Naive thymus-derived CD4-positive, alpha-beta T cell (primary cell): ENCODE measurements at regions of chr12 and their contacts with region 1.

Region 1: GRCh38 chr12:21613931-21614330 is 9.3 kb upstream of the GYS2 start:
- DNase-seq: no peak
- ATAC-seq: no peak
- H3K4me3 ChIP-seq: no peak overlapping the region
- H3K4me3 Mint-ChIP-seq: peak overlapping the region in 8 of 10 donors; percentile 36 to 82 (median 64)
- H3K27ac ChIP-seq: peak overlapping the region; percentile 61
- H3K27ac Mint-ChIP-seq: peak overlapping the region in 8 of 9 donors; percentile 84 to 98 (median 94)
- H3K4me1 ChIP-seq: peaks cover 25 to 46% of the 10 kb centered on the region in 2 donors
- H3K4me1 Mint-ChIP-seq: peaks cover 35 to 69% (median 60%) of the 10 kb centered on the region in 7 donors
- H3K27me3 ChIP-seq: no peaks in the 10 kb centered on the region
- H3K27me3 Mint-ChIP-seq: no peaks in the 10 kb centered on the region

Region 2: GRCh38 chr12:20314328-20314727 is 1299.6 kb before region 1 on chr12:
- CTCF ChIA-PET with region 1: no interaction called
- POLR2A ChIA-PET with region 1: no interaction called
- intact Hi-C with region 1: no loop called
- DNase-seq: no peak
- ATAC-seq: no peak
- H3K4me3 ChIP-seq: no peak overlapping the region
- H3K4me3 Mint-ChIP-seq: no peak overlapping the region
- H3K27ac ChIP-seq: no peak overlapping the region
- H3K27ac Mint-ChIP-seq: no peak overlapping the region
- H3K4me1 ChIP-seq: no peaks in the 10 kb centered on the region
- H3K4me1 Mint-ChIP-seq: no peaks in the 10 kb centered on the region
- H3K27me3 ChIP-seq: no peaks in the 10 kb centered on the region
- H3K27me3 Mint-ChIP-seq: no peaks in the 10 kb centered on the region

Region 3: GRCh38 chr12:21451529-21451928 is 162.4 kb before region 1 on chr12:
- CTCF ChIA-PET with region 1: no interaction called
- POLR2A ChIA-PET with region 1: no interaction called
- intact Hi-C with region 1: loop called in 1 of 2 experiments (anchors 5 kb)
- DNase-seq: no peak
- ATAC-seq: no peak
- H3K4me3 ChIP-seq: no peak overlapping the region
- H3K4me3 Mint-ChIP-seq: no peak overlapping the region
- H3K27ac ChIP-seq: no peak overlapping the region
- H3K27ac Mint-ChIP-seq: peak overlapping the region in 4 of 9 donors; percentile 6 to 51 (median 28)
- H3K4me1 ChIP-seq: peaks cover 2 to 21% of the 10 kb centered on the region in 2 donors
- H3K4me1 Mint-ChIP-seq: peaks cover 2 to 48% (median 29%) of the 10 kb centered on the region in 7 donors
- H3K27me3 ChIP-seq: no peaks in the 10 kb centered on the region
- H3K27me3 Mint-ChIP-seq: no peaks in the 10 kb centered on the region

Region 4: DNA sequence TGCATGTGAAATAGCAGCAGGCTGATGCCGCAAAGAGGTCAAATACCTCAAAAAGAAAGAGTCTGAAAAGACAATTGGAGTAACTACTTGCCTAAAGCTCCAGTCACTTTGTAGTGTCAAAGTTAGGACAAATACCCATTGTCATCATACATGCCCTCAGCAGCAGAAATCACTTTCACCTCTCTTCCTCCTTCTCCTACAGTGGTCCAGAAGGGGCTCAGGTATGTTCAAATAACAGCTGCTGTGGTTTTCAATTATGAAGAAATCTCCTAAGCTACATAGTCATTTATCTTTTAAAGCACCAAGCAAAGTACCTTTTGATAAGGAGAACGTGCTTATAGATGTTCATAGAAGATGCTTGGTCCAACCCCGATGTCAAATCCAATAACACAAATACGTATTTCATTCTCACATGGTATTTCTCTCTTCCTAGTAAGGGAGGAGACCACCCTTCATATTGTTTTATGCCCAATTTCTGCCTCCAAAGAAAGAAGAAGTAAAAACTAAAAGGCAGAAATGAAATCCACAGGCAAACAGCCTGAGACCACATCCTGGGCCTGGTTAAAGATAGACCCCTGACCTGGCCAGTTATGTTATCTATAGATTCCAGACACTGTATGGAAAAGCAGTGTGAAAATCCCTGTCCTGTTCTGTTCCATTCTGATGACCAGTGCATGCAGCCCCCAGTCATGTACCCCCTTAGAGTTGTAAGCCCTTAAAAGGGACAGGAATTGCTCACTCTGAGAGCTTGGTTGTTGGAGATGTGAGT is 33.0 kb before region 1 on chr12:
- CTCF ChIA-PET with region 1: no interaction called
- POLR2A ChIA-PET with region 1: no interaction called
- intact Hi-C with region 1: no loop called
- DNase-seq: no peak
- ATAC-seq: no peak
- H3K4me3 ChIP-seq: no peak overlapping the region
- H3K4me3 Mint-ChIP-seq: no peak overlapping the region
- H3K27ac ChIP-seq: no peak overlapping the region
- H3K27ac Mint-ChIP-seq: no peak overlapping the region
- H3K4me1 ChIP-seq: no peaks in the 10 kb centered on the region
- H3K4me1 Mint-ChIP-seq: peaks cover 0 to 6% (median 0%) of the 10 kb centered on the region in 7 donors
- H3K27me3 ChIP-seq: peaks cover 0 to 3% of the 10 kb centered on the region in 2 donors
- H3K27me3 Mint-ChIP-seq: peaks cover 5 to 26% (median 17%) of the 10 kb centered on the region in 5 donors

Region 5: DNA sequence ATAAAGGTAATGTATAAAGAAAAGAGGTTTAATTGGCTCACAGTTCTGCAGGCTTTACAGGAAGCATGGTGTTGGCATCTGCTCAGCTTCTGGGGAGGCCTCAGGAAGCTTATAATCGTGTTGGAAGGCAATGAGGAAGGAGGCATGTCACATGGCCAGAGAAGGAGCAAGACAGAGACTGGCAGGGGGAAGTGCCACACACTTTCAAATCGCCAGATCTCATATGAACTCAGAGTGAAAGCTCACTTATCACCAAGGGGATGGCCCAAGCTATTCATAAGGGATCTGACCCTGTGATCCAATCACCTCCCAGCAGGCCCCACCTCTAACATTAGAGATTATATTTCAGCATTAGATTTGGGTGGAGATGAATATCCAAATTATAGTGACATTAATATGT is 17.4 kb after region 1 on chr12:
- CTCF ChIA-PET with region 1: interaction called, 3 read pairs
- POLR2A ChIA-PET with region 1: interaction called, 13 read pairs
- intact Hi-C with region 1: loop called (anchors 1 to 2 kb)
- DNase-seq: no peak
- ATAC-seq: no peak
- H3K4me3 ChIP-seq: no peak overlapping the region
- H3K4me3 Mint-ChIP-seq: peak overlapping the region in 1 of 10 donors; percentile 13
- H3K27ac ChIP-seq: no peak overlapping the region
- H3K27ac Mint-ChIP-seq: peak overlapping the region in 6 of 9 donors; percentile 49 to 76 (median 64)
- H3K4me1 ChIP-seq: no peaks in the 10 kb centered on the region
- H3K4me1 Mint-ChIP-seq: peaks cover 0 to 35% (median 16%) of the 10 kb centered on the region in 7 donors
- H3K27me3 ChIP-seq: no peaks in the 10 kb centered on the region
- H3K27me3 Mint-ChIP-seq: no peaks in the 10 kb centered on the region

Region 6: GRCh38 chr12:21650833-21651396 is 37.0 kb after region 1 on chr12:
- CTCF ChIA-PET with region 1: interaction called, 10 read pairs
- POLR2A ChIA-PET with region 1: interaction called, 15 read pairs
- intact Hi-C with region 1: no loop called
- DNase-seq: no peak
- ATAC-seq: no peak
- H3K4me3 ChIP-seq: peak overlapping the region; percentile 1
- H3K4me3 Mint-ChIP-seq: peak overlapping the region; percentile 28 to 89 (median 68)
- H3K27ac ChIP-seq: peak overlapping the region; percentile 8
- H3K27ac Mint-ChIP-seq: peak overlapping the region; percentile 7 to 84 (median 73)
- H3K4me1 ChIP-seq: peaks cover 15 to 91% of the 10 kb centered on the region in 2 donors
- H3K4me1 Mint-ChIP-seq: peaks cover 71 to 100% (median 94%) of the 10 kb centered on the region in 7 donors
- H3K27me3 ChIP-seq: no peaks in the 10 kb centered on the region
- H3K27me3 Mint-ChIP-seq: no peaks in the 10 kb centered on the region

Region 7: DNA sequence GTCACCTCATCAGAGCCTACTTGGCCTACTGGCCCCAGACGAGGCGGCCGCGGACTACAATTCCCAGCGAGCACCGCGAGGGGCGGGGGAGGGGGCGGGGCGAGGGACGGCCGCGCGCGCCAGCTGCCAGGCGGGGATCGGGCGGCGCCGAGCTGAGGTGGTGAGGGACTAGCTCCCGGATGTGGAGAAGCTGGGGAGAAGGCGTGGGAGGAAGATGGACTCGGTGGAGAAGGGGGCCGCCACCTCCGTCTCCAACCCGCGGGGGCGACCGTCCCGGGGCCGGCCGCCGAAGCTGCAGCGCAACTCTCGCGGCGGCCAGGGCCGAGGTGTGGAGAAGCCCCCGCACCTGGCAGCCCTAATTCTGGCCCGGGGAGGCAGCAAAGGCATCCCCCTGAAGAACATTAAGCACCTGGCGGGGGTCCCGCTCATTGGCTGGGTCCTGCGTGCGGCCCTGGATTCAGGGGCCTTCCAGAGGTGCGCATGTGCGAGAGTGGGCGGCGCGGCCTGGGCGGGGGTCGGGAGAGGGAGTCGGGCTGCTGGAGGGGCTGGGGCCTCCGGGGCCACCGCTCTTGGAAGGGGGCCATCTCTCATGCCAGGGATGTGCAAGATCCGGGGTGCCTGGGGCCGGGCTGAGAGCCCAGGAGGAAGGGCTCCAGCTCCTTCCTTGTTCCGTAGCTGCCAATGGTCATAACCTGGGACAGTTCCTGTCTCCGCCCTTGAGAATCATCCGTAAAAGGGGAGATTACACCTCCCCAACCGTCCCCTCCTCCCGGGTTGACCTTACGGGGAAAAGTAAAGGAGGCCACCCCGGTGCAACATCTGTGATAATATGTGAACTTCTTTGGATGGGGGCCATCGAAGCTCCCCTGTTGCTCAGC is 432.4 kb after region 1 on chr12 and contains the start of gene CMAS:
- CTCF ChIA-PET with region 1: no interaction called
- POLR2A ChIA-PET with region 1: no interaction called
- intact Hi-C with region 1: loop called (anchors 2 to 5 kb)
- DNase-seq: peak; percentile 49 to 76 (median 65)
- ATAC-seq: peak; percentile 93
- H3K4me3 ChIP-seq: peak within 1 kb of the TSS; percentile 82
- H3K4me3 Mint-ChIP-seq: peak within 1 kb of the TSS; percentile 80 to 99 (median 94)
- H3K27ac ChIP-seq: peak within 1 kb of the TSS; percentile 82
- H3K27ac Mint-ChIP-seq: peak within 1 kb of the TSS; percentile 35 to 95 (median 89)
- H3K4me1 ChIP-seq: peaks cover 10 to 15% of the 10 kb centered on the region in 2 donors
- H3K4me1 Mint-ChIP-seq: peaks cover 27 to 65% (median 48%) of the 10 kb centered on the region in 7 donors
- H3K27me3 ChIP-seq: no peaks in the 10 kb centered on the region
- H3K27me3 Mint-ChIP-seq: no peaks in the 10 kb centered on the region
- total RNA-seq, gene CMAS: 10.1 to 33.6 (median 19.4) TPM